Ovary (tissue), 10 donors: ENCODE measurements at regions of chr12 and their contacts with region 1.

Region 1: GRCh38 chr12:121872546-121873215 is 14.0 kb upstream of the HPD start:
- DNase-seq: peak; percentile 43 to 83 (median 66)
- H3K4me3 ChIP-seq: no peak overlapping the region
- H3K27ac ChIP-seq: no peak overlapping the region
- H3K4me1 ChIP-seq: no peaks in the 10 kb centered on the region
- H3K27me3 ChIP-seq: no peaks in the 10 kb centered on the region
- CTCF ChIP-seq: no peak
- EP300 ChIP-seq: no peak
- POLR2A ChIP-seq: no peak

Region 2: DNA sequence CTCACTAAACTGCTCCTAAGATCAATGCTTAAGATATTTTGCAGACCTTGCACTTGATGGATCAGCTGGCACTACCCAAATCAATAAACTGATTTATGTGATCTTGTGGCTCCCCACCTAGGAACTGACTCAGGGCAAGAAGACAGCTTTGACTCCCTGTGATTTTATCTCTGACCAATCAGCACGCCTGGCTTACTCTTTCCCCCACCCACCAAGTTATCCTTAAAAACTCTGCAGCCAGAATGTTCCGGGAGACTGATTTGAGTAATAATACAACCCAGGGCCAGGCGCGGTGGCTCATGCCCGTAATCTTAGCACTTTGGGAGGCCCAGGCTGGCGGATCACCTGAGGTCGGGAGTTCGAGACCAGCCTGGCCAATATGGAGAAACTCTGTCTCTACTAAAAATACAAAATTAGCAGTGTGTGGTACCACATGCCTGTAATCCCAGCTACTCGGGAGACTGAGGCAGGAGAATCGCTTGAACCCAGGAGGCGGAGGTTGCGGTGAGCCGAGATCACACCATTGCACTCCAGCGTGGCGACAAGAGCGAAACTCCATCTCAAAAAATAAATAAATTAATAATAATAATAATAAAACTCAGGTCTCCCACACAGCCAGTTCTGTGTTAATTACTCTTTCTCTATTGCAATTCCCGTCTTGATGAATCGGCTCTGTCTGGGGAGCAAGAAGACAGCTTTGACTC is 215.2 kb before region 1 on chr12:
- intact Hi-C with region 1: no loop called
- DNase-seq: no peak
- H3K4me3 ChIP-seq: no peak overlapping the region
- H3K27ac ChIP-seq: no peak overlapping the region
- H3K4me1 ChIP-seq: no peaks in the 10 kb centered on the region
- H3K27me3 ChIP-seq: no peaks in the 10 kb centered on the region
- CTCF ChIP-seq: no peak
- EP300 ChIP-seq: no peak
- POLR2A ChIP-seq: no peak

Region 3: DNA sequence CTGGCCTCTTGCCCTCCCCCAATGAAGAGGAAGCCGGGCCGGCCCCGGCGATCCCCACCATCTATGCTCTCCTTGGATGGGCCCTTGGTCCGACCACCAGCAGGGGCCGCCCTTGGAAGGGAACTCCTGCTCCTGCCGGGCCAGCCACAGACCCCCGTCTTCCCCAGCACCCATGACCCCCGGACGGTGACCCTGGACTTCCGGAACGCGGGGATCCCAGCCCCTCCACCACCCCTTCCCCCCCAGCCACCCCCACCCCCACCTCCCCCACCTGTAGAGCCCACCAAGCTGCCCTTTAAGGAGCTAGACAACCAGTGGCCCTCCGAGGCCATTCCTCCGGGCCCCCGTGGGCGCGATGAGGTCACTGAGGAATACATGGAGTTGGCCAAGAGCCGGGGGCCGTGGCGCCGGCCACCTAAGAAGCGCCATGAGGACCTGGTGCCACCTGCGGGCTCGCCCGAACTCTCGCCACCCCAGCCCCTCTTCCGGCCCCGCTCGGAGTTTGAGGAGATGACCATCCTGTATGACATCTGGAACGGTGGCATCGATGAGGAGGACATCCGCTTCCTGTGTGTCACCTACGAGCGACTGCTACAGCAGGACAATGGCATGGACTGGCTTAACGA is 49.5 kb before region 1 on chr12:
- intact Hi-C with region 1: loop called in 1 of 4 experiments (anchors 10 kb)
- DNase-seq: no peak
- H3K4me3 ChIP-seq: no peak overlapping the region
- H3K27ac ChIP-seq: no peak overlapping the region
- H3K4me1 ChIP-seq: no peaks in the 10 kb centered on the region
- H3K27me3 ChIP-seq: no peaks in the 10 kb centered on the region
- CTCF ChIP-seq: no peak
- EP300 ChIP-seq: no peak
- POLR2A ChIP-seq: no peak

Region 4: DNA sequence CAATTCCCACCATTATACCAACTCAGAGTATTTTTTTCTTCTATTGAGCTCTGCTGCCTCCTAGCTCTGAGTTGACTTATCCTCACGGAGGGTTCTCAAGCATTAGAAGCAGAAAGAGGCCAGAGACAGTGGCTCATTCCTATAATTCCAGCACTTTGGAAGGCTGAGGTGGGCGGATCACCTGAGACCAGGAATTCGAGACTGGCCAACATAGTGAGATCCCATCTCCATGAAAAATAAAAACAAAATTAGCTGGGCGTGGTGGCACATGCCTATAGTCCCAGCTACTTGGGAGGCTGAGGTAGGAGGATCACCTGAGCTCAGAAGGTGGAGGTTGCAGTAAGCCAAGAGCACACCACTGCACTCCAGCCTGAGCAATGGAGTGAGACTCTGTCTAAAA is 35.0 kb before region 1 on chr12:
- intact Hi-C with region 1: no loop called
- DNase-seq: no peak
- H3K4me3 ChIP-seq: no peak overlapping the region
- H3K27ac ChIP-seq: no peak overlapping the region
- H3K4me1 ChIP-seq: peaks cover 1% of the 10 kb centered on the region
- H3K27me3 ChIP-seq: no peaks in the 10 kb centered on the region
- CTCF ChIP-seq: no peak
- EP300 ChIP-seq: no peak
- POLR2A ChIP-seq: no peak